ENCODE measurements at regions of chr20 and their contacts with region 1.

Region 1: DNA sequence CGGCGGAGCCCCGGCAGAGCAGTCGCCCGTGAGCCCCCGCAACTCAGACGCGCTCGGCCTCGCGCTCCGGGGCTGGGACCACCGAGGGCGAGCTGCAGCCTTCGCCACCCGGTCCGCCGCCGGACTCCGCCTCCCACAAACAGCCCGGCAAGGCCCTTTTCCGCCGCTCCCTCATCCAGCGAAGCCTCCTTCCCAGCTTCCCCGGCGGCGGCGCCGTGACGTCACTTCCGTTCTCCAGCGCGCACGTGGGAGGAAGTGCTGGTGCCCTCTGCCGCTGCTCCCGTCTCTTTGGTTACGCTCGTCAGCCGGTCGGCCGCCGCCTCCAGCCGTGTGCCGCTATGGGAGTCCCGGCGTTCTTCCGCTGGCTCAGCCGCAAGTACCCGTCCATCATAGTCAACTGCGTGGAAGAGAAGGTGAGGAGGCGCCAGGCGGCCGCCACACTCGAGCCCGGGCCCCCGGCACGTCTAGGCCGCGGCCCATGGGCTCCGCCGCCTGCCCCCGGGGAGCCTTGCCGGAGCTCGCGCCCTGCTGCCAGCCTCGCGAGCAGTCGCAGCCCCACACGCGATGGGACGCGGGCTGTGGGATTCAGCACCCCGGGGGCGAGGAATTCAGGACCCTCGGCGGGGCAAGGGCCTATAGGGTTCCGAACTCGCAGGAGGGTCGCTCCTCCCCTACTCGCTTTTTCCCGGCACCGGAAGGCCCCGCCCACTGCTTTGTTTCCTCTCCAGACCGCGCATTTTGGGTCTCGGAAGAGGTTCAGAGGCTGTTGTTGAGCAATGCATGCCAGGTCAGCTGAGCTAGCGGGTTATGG is at the start of gene XRN2:
- DNase-seq: peak; percentile 96 to 97
- ATAC-seq: peak; percentile 98 to 99 (median 99)
- H3K4me3 ChIP-seq: peak within 1 kb of the TSS; percentile 70 to 99 (median 86)
- H3K27ac ChIP-seq: peak within 1 kb of the TSS; percentile 80 to 99 (median 96)
- H3K4me1 ChIP-seq: peaks cover 3 to 23% (median 18%) of the 10 kb centered on the region in 9 donors
- H3K27me3 ChIP-seq: no peaks in the 10 kb centered on the region
- CTCF ChIP-seq: peak in 4 of 9 donors; percentile 5 to 46 (median 26)
- total RNA-seq, gene XRN2: 28.6 to 39.8 (median 32.1) TPM

Region 2: DNA sequence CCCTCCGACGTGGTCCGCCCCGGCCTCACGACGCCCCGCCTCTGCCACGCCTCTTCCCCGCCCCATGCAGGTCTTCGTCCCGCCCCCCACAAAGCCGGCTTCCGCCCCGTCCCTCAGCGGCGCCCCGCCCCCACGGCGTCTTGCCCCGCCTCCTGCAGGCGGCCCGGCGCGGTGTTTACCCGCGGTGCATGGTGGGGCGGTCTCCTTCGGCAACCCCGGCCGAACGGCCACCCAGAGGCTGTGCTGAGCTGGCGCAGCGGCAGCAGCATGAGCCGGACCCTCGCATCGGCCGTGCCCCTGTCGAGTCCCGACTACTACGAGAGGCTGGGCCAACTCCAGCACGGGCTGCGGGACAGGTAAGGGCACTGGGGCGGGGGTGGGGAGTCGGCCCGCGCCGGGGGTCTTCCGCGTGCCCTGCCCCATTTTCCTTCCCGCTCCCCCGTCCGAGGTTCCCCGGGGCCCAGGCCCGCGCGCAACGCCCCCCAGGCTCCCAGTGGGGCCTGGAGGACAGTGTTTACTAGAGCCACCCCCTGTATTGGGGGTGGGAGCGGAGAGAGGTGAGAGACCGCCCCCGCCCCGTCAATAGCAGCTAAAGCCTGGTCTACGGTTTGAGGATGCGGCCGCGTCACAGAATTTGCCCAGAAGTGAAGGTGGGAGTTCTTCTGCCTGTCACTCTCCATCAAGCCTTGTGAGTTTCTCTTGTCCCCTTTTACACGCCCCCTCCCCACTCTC is 177.3 kb before region 1 on chr20 and contains the start of gene KIZ:
- intact Hi-C with region 1: loop called in 1 of 10 experiments (anchors 5 kb)
- DNase-seq: peak; percentile 95 to 99
- ATAC-seq: peak; percentile 99 to 100 (median 100)
- H3K4me3 ChIP-seq: peak within 1 kb of the TSS; percentile 67 to 98 (median 96)
- H3K27ac ChIP-seq: peak within 1 kb of the TSS; percentile 62 to 89 (median 81)
- H3K4me1 ChIP-seq: peaks cover 0 to 19% (median 11%) of the 10 kb centered on the region in 9 donors
- H3K27me3 ChIP-seq: no peaks in the 10 kb centered on the region
- CTCF ChIP-seq: peak in 7 of 9 donors; percentile 17 to 58 (median 53)
- total RNA-seq, gene KIZ: 16.8 to 38.2 (median 26.5) TPM

Region 3: DNA sequence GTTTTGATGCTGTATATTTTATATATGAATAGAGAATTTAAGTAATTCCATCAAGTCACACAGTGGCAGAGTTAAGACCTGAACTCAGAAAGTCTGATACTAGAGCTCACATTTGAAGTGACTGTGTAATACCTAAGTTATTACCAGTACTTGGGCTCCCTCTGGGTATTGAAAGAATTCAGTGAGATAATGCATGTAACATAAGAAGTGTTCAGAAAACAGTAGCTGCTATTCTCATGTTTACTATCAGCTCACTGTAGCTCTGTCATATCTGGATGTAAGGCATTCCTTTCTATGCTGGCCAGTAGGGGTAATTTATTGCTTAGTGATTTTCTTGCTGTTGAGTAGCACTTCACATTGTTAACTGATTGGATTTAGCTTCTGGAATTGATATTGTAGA is 49.4 kb after region 1 on chr20:
- intact Hi-C with region 1: loop called in 1 of 10 experiments (anchors 10 kb)
- DNase-seq: no peak
- ATAC-seq: no peak
- H3K4me3 ChIP-seq: no peak overlapping the region
- H3K27ac ChIP-seq: no peak overlapping the region
- H3K4me1 ChIP-seq: peaks cover 0 to 3% (median 0%) of the 10 kb centered on the region in 9 donors
- H3K27me3 ChIP-seq: no peaks in the 10 kb centered on the region
- CTCF ChIP-seq: no peak

Region 4: GRCh38 chr20:21365771-21366170 is 62.5 kb after region 1 on chr20:
- intact Hi-C with region 1: loop called in 2 of 10 experiments (anchors 5 to 10 kb)
- DNase-seq: no peak
- ATAC-seq: no peak
- H3K4me3 ChIP-seq: no peak overlapping the region
- H3K27ac ChIP-seq: no peak overlapping the region
- H3K4me1 ChIP-seq: peaks cover 0 to 13% (median 0%) of the 10 kb centered on the region in 9 donors
- H3K27me3 ChIP-seq: no peaks in the 10 kb centered on the region
- CTCF ChIP-seq: no peak

Region 5: DNA sequence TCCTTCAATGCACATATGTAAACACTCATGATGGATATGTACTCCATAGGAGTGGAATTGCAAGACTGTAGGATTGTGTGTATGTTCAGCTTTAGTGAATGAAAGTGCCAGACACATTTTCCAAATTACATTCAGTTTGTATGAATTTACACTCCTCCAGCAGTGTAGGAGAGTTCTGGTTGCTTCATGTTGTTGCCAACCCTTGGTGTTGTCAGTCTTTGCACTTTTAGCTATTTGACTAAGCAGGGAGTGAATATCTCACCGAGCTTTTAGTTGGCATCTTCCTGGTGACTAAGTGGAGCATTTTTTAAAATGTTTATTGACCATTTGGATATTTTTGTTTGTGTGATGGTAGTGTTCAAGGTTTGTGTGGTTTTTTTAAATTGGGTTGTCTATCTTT is 70.2 kb after region 1 on chr20:
- intact Hi-C with region 1: loop called in 2 of 10 experiments (anchors 5 to 10 kb)
- DNase-seq: no peak
- ATAC-seq: no peak
- H3K4me3 ChIP-seq: no peak overlapping the region
- H3K27ac ChIP-seq: no peak overlapping the region
- H3K4me1 ChIP-seq: peaks cover 0 to 7% (median 0%) of the 10 kb centered on the region in 9 donors
- H3K27me3 ChIP-seq: no peaks in the 10 kb centered on the region
- CTCF ChIP-seq: no peak

Measured in heart right ventricle (tissue), 16 donors.